Heart right ventricle (tissue), 16 donors: ENCODE measurements at regions of chrX and their contacts with region 1.

Region 1: DNA sequence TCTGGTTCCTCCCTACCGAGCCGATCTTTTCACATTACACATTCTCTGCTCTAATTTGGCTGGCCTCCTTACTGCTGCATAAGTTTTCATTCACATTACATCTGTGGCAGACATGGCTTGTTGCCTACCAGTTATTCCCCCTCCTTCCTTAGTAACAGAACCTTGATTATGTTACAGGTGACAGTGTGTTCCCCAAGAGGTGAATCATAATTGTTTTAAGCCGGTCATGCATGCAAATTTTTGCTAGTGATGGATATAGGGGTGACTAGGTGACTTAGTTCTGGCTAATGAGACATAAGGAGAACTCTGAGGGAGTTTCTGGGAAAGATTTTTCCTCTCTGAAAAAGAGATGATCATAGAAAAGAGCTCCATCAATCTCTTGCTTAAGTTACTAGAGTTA is 8.4 kb upstream of the LAMP2 start:
- DNase-seq: no peak
- ATAC-seq: no peak
- H3K4me3 ChIP-seq: no peak overlapping the region
- H3K27ac ChIP-seq: no peak overlapping the region
- H3K4me1 ChIP-seq: no peaks in the 10 kb centered on the region
- H3K27me3 ChIP-seq: peaks cover 0 to 8% (median 0%) of the 10 kb centered on the region in 7 donors
- CTCF ChIP-seq: no peak

Region 2: DNA sequence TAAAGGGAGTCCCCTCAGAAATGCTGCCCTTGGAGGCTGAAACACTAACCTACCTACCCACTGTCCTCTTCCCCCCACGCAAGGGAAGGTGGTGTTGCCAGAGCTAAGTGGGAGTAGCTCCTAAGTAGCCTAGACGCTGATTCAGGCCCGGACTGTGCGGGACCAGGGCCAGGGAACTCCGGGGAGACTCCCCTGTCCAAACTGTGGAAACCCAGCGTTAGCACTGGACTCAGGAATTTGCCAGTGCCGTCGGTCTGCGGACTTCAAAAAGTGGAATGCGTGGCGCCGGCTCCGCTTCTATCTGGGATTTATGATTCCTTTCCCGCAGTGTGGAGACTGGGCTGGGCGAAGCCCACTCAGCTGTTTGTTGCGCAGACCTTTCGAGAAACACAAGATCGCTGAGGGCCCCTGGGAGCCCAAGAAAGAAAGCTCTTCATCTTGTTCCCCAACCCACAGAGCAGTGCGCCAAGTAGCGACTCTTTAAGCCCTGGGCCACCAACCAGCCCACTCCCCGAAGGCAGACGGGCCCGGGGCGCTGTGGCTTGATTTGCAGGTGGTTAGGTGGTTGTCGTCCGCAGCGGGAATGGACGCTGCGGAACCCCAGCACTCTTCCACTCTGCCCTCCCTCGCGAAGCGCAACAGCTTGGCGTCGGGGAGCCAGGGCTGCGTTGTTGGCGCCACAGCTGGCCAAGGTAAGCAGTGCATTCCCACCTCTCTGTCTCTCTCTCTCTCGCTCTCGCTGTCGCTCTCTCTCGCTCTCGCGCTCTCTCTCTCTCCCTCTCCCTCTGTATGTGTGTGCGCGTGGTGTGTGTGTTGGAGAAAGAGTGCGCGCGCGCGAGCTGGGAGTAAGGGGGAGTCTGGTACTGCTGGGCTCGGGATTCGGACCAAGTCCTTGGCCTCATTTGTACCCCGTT is 168.2 kb before region 1 on chrX:
- intact Hi-C with region 1: loop called in 4 of 10 experiments (anchors 10 kb)
- DNase-seq: peak; percentile 31 to 36
- ATAC-seq: peak; percentile 54 to 88 (median 82)
- H3K4me3 ChIP-seq: peak overlapping the region in 9 of 10 donors; percentile 9 to 55 (median 42)
- H3K27ac ChIP-seq: no peak overlapping the region
- H3K4me1 ChIP-seq: peaks cover 0 to 25% (median 6%) of the 10 kb centered on the region in 9 donors
- H3K27me3 ChIP-seq: peaks cover 0 to 93% (median 23%) of the 10 kb centered on the region in 7 donors
- CTCF ChIP-seq: peak in 5 of 9 donors; percentile 25 to 47 (median 40)

Region 3: GRCh38 chrX:120536061-120536460 is 58.6 kb after region 1 on chrX:
- intact Hi-C with region 1: no loop called
- DNase-seq: no peak
- ATAC-seq: no peak
- H3K4me3 ChIP-seq: no peak overlapping the region
- H3K27ac ChIP-seq: no peak overlapping the region
- H3K4me1 ChIP-seq: peaks cover 0 to 3% (median 0%) of the 10 kb centered on the region in 9 donors
- H3K27me3 ChIP-seq: peaks cover 0 to 3% (median 0%) of the 10 kb centered on the region in 7 donors
- CTCF ChIP-seq: no peak

Region 4: DNA sequence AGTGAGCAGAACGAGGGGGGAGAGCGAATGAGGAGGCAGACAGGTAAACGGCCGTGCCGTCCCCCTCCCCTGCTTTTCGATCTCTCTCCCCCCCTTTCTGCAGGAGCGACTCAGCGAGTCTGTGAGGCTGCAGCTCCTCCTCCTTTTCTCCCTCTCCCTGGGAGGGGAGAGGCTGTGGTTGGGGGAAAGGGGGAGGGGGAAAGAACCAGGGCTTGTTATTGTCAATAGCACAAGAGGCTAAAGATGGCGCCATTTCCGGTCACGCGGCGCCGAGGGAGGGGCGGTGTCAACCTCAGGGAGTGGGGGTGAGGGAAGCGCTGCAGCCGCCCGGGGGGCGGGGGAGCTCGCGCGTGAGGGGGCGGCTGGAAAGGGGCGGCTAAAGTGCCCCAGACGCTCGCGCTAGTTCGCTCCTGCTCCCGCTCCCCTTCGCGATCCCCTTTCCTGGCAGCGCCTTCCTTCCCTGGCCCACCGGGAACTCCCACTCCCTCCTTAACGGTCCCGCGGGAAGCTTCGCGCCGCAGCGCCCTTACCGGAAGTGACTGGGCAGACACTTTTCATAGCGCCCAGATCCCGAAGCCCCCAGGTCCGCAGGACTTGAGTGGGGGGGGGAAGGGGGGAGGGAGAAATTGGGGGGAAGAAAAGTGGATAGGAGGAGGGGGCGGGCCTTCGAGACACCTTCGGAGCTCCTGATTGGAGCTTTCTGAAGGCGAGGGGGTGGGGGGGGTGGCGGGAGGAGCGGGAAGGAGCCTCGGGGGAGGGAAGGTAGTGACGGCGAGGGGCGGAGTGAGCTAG is 83.6 kb after region 1 on chrX and contains the start of gene CUL4B:
- intact Hi-C with region 1: no loop called
- DNase-seq: peak; percentile 91 to 93
- ATAC-seq: peak; percentile 90 to 98 (median 96)
- H3K4me3 ChIP-seq: peak within 1 kb of the TSS; percentile 41 to 75 (median 66)
- H3K27ac ChIP-seq: peak within 1 kb of the TSS; percentile 94 to 99 (median 98)
- H3K4me1 ChIP-seq: peaks cover 0 to 37% (median 13%) of the 10 kb centered on the region in 9 donors
- H3K27me3 ChIP-seq: no peaks in the 10 kb centered on the region
- CTCF ChIP-seq: no peak
- total RNA-seq, gene CUL4B: 17.1 to 24.1 (median 19.9) TPM

Region 5: DNA sequence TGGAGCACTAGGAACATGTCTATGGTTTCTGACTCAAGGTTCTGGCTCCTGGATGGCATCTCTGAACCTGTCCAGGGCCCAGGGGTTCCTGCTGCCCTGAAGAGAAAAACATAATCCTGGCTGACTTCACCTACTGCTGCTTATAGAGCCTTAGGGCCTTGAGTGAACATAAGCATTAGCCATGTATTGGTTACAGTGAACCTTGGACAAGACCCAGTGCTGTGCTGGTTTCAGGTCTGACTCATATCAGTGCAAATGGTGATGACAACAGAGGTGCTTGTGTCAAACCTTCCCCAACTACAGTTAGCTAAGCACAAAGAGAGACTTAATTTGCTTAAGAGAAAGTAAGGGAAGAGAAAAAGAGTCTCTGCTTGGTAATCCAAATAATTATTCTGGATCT is 1617.2 kb after region 1 on chrX:
- intact Hi-C with region 1: no loop called
- DNase-seq: no peak
- ATAC-seq: no peak
- H3K4me3 ChIP-seq: no peak overlapping the region
- H3K27ac ChIP-seq: no peak overlapping the region
- H3K4me1 ChIP-seq: no peaks in the 10 kb centered on the region
- H3K27me3 ChIP-seq: no peaks in the 10 kb centered on the region
- CTCF ChIP-seq: no peak